Spleen (tissue), 13 donors: ENCODE measurements at regions of chr2 and their contacts with region 1.

Region 1: GRCh38 chr2:96642564-96643360 is at the start of gene FER1L5:
- DNase-seq: no peak
- H3K4me3 ChIP-seq: no peak within 1 kb of the TSS
- H3K27ac ChIP-seq: peak within 1 kb of the TSS in 4 of 8 donors; percentile 13 to 52 (median 40)
- H3K4me1 ChIP-seq: peaks cover 0 to 10% (median 3%) of the 10 kb centered on the region in 6 donors
- H3K27me3 ChIP-seq: no peaks in the 10 kb centered on the region
- CTCF ChIP-seq: no peak
- POLR2A ChIP-seq: no peak
- total RNA-seq, gene FER1L5: 0.09 to 0.23 (median 0.13) TPM in 5 of 7 donors, not detected in the others

Region 2: DNA sequence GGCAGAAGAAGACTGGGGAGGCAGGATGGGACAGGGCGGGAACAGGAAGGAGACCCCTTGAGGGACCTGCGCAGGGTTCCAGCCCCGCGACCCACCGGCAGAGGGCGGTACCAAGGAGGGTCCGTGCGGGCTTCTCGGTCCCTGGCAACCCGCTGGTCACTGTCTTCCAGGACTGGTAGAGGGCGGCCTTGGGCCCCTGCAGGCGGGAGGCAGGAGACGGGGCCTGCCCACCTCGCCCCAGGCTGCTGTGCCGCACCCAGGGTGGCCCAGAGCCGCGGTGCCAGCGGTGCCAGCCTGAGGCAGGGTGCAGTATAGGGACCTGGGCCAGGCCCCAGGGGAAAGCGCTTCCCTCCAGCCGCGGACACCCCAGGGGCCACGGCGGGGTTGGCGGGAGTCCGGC is 172.1 kb before region 1 on chr2:
- intact Hi-C with region 1: no loop called
- DNase-seq: peak; percentile 82
- H3K4me3 ChIP-seq: peak overlapping the region in 4 of 8 donors; percentile 6 to 52 (median 16)
- H3K27ac ChIP-seq: peak overlapping the region in 7 of 8 donors; percentile 16 to 79 (median 66)
- H3K4me1 ChIP-seq: peaks cover 0 to 10% (median 10%) of the 10 kb centered on the region in 6 donors
- H3K27me3 ChIP-seq: peaks cover 0 to 12% (median 5%) of the 10 kb centered on the region in 7 donors
- CTCF ChIP-seq: peak in 10 of 11 experiments; percentile 32 to 76 (median 70)
- POLR2A ChIP-seq: no peak

Region 3: DNA sequence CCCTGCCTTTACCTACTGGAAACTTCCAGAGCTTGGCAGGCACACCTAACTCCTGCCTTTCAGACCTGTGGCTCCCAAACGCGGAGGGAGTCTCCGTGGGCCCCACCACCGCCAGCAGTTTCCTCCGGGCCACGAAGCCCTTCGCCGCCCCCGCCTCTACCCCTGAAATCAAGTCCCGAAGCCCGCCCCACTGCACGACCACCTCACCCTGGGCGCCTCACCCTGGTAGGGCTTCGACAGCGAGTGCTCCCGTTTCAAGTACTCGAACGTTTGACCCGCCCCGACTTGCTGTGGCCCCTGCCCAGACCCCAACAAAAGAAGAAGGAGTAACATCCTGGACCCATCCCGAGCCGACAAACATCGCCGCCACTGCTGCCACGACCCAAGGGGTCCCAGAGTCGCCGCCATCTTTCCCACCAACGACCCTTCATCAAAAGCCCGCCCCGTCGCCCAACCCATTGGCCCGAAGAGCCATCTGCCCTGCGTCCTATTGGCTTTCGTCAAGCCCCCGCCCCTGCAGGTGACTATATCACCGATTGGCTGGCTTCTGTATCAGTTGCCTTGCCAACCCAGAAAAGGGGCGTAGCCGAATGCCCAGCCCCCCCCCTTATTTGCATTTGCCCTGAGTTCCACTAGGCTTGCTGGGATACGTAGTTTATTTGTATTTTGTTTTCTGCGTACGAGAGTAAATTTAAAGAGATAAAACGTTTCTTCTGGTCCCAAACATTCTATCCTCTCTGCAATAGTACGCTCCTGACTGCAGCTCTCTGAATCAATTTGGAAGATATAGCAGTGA is 97.1 kb after region 1 on chr2 and contains the start of gene LMAN2L:
- intact Hi-C with region 1: loop called (anchors 10 kb)
- DNase-seq: peak; percentile 97
- H3K4me3 ChIP-seq: peak within 1 kb of the TSS; percentile 77 to 95 (median 86)
- H3K27ac ChIP-seq: peak within 1 kb of the TSS; percentile 29 to 87 (median 74)
- H3K4me1 ChIP-seq: peaks cover 13 to 58% (median 38%) of the 10 kb centered on the region in 6 donors
- H3K27me3 ChIP-seq: no peaks in the 10 kb centered on the region
- CTCF ChIP-seq: peak in 2 of 11 experiments; percentile 36 to 42
- POLR2A ChIP-seq: no peak
- total RNA-seq, gene LMAN2L: 8.7 to 15.4 (median 10.8) TPM